Activated CD4-positive, alpha-beta T cell treated with anti-CD3 and anti-CD28 coated beads for 36 hours (primary cell): ENCODE measurements at regions of chr2 and their contacts with region 1.

Region 1: DNA sequence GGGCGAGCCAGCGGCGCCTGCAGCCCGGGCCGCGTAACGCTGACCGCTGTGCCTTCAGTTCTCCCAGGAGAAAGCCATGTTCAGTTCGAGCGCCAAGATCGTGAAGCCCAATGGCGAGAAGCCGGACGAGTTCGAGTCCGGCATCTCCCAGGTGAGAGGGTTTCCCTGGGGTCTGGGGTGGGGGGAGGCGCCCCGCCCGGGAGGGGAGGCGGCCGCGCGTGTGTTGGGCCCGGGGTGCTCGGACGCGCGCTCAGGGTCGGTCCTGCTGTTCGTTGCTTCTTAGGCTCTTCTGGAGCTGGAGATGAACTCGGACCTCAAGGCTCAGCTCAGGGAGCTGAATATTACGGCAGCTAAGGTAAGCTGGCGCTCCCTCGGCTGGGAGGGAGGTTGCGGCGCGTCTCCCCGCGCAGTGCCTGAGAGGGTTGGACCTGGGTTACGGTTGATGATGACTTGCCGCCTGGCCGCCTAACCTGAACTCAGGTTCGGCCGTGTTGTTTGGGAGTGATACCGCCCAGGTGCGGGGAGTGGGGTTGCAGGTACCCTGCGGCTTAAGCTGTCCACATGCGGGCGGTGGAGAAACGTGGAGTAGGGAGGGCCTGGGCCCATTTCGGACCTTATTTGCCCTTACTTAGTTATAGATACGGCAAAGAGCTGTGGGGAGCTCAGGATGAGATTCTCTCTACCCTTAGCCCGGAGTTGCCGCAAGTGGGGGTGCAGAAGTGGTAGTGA is 638 bp downstream of the RPS7 start:
- DNase-seq: peak; percentile 45
- ATAC-seq: peak; percentile 8
- H3K4me3 Mint-ChIP-seq: peak overlapping the region; percentile 94
- H3K27ac Mint-ChIP-seq: peak overlapping the region; percentile 92
- H3K4me1 Mint-ChIP-seq: peaks cover 47% of the 10 kb centered on the region
- H3K27me3 Mint-ChIP-seq: no peaks in the 10 kb centered on the region

Region 2: DNA sequence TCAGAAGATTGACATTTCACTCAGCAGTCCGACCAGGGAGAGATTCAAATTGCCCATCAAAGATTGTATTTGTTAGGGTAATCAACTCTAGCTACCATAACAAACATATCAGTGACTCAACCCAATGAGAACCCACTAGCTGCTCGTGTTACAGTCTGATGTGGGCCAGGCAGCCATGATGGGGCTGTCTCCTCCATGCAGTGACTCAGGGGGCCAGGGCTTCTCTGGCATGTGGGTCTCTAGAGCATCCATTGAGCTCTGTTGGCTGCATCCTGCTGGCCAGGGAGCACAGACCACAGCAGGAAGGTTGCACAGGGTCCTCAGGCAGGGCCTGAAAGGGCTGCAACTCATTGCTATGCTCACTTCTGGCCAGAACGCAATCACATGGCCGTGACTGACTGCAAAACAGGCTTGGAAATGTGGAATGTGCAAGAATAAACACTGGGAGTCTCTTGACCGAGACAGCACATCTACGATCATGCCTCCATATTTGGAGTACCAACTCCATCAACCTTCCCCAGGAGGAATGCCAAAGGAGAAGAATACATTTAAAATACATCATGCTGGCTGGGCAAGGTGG is 414.9 kb before region 1 on chr2:
- CTCF ChIA-PET with region 1: no interaction called
- POLR2A ChIA-PET with region 1: no interaction called
- intact Hi-C with region 1: no loop called
- DNase-seq: no peak
- ATAC-seq: no peak
- H3K4me3 Mint-ChIP-seq: no peak overlapping the region
- H3K27ac Mint-ChIP-seq: no peak overlapping the region
- H3K4me1 Mint-ChIP-seq: no peaks in the 10 kb centered on the region
- H3K27me3 Mint-ChIP-seq: no peaks in the 10 kb centered on the region

Region 3: DNA sequence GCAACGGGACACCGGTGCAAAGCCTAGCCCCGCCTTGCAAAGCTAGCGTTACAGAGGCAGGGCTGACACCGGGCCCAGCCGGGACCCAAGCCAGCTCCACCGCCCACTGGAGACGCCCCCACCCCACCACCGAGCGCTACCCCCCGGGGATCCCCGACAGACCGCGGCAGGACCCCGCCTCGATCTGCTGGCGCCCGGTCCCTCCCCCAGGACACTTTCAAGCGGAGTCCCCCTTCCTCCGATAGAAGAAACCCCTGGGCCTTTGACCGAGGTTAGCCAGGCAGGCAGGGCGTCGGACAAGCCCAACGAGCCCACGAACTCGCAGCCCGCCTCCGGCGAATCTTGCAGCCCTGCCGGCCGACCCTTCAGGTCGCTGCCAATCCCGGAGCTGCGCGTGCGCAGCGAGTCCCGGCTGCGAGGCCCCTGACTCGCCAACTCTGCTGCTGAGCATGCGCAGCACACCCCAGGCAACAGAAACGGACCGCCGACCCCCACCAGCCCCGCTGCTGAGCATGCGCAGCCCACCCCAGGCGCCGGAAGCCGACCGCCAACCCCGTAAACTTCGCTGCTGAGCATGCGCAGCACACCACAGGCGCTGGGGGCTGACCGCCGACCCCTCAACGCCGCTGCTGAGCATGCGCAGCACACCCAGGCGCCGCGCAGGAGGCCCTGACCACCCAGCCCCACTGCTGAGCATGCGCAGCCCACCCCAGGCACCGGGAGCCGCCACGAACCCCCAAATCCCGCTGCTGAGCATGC is 57.0 kb before region 1 on chr2:
- CTCF ChIA-PET with region 1: interaction called, 3 read pairs
- POLR2A ChIA-PET with region 1: no interaction called
- intact Hi-C with region 1: loop called (anchors 1 kb)
- DNase-seq: peak; percentile 99
- ATAC-seq: peak; percentile 83
- H3K4me3 Mint-ChIP-seq: peak overlapping the region; percentile 84
- H3K27ac Mint-ChIP-seq: peak overlapping the region; percentile 83
- H3K4me1 Mint-ChIP-seq: peaks cover 38% of the 10 kb centered on the region
- H3K27me3 Mint-ChIP-seq: no peaks in the 10 kb centered on the region